Keratinocyte (primary cell): ENCODE measurements at regions of chr6 and their contacts with region 1.

Region 1: DNA sequence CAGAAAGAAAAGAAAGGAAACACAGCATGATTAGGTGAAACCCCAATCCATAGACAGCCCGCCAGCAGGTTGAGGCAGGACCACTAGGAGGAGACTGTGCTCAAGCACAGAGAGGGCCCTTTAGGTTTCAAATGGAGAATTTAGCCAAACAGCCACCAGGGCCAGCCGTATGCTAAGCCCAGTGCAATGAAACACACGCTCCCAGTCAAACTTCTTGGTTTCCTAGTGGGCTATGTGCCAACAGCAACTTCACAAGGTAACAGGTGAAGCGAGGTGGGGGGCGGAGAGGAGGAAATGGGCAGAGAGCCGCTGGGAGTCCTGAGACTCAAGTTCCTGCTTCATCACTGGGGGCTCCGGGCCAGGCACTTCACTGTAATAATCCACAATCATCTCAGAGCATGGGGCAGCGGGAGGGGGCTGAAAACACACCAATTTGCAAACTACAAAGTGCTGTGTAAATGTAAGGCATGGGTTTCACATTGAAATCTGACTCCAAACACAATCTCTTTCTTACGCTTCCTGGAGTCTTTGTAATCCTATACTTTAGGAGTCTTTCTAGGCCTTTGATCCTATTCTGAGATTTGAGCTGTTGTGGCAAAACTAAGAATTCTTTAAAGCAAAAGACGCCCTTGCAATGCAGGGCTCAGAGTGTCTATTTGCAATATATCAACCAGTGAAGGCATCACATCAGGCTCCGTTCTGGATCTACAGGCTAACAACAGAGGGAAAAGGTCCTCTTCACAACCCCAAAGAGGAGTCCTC is 117.3 kb downstream of the OPRM1 start:
- DNase-seq: no peak
- H3K4me3 ChIP-seq: no peak overlapping the region
- H3K27ac ChIP-seq: no peak overlapping the region
- H3K4me1 ChIP-seq: no peaks in the 10 kb centered on the region
- H3K27me3 ChIP-seq: no peaks in the 10 kb centered on the region
- CTCF ChIP-seq: peak; percentile 54 to 67 (median 66)

Region 2: DNA sequence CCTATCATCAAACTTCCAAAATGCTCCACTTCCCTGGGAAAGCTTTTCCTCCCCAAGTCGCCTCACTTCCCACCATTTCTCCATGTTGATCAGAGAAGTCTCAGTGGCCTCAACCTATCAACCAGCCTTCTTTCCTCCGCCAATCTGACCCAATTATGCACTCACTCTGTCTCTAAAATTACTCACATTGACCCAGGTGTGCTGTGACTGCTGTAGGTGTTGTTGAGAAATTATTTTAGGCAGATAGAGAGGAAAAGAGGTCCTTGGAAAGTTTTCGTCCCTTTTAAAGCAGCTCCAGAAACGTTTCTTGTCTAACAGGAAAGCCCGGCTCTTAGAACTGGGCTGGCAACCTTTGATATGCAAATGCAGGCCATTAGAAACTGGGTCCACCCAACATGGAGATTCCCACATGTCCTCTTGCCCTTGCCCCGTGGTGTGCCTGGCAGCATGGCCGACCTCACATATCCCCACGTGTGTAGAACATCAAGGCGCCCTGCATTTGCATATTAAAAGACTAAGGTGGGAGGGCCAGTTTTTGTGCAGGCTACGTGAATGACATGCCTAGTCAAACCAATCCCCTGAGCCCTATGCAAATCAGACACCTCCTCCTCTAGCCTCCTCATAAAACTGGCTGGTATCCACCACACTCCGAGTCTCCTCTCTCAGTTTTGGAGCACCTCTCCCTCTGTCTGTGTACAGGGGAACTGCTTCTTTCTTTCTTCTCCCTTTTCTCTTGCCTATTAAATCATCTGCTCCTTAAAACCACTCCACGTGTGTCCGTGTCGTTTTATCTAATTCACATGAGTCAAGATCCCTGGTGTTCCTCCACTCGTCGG is 187.4 kb after region 1 on chr6:
- dilution Hi-C with region 1: loop called (anchors 25 kb)
- DNase-seq: peak; percentile 17
- H3K4me3 ChIP-seq: peak overlapping the region in 2 of 3 experiments; percentile 7 to 12
- H3K27ac ChIP-seq: no peak overlapping the region
- H3K4me1 ChIP-seq: peaks cover 15% of the 10 kb centered on the region
- H3K27me3 ChIP-seq: no peaks in the 10 kb centered on the region
- CTCF ChIP-seq: peak; percentile 50 to 71 (median 63)

Region 3: GRCh38 chr6:154474636-154475428 is 318.5 kb after region 1 on chr6:
- dilution Hi-C with region 1: loop called (anchors 25 kb)
- DNase-seq: no peak
- H3K4me3 ChIP-seq: no peak overlapping the region
- H3K27ac ChIP-seq: peak overlapping the region; percentile 3
- H3K4me1 ChIP-seq: peaks cover 13% of the 10 kb centered on the region
- H3K27me3 ChIP-seq: no peaks in the 10 kb centered on the region
- CTCF ChIP-seq: no peak